Heart right ventricle (tissue), 16 donors: ENCODE measurements at regions of chr18 and their contacts with region 1.

Region 1: DNA sequence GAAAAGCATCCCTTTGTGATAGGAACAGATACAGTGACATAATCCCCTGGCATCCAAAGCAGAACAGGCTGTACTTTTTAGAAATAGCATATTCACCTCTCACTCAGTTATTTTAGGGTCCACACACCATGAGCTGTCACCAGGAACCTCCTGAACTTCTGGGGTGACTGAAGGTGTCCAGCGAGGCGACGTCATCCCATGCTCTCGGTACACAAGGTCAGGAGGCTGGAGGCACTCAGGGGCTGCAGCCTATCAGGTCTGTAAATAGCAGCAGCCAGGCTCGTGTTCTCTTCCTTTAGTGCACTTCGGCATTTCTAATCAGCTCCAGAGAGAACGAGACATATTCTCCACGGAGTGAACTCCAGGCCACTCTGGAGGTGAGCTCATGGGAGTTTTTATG is 98.3 kb downstream of the GATA6 start:
- DNase-seq: peak; percentile 70 to 85
- ATAC-seq: peak; percentile 83 to 97 (median 92)
- H3K4me3 ChIP-seq: peak overlapping the region in 5 of 10 donors; percentile 44 to 52 (median 48)
- H3K27ac ChIP-seq: peak overlapping the region; percentile 78 to 95 (median 91)
- H3K4me1 ChIP-seq: peaks cover 0 to 41% (median 4%) of the 10 kb centered on the region in 9 donors
- H3K27me3 ChIP-seq: no peaks in the 10 kb centered on the region
- CTCF ChIP-seq: no peak

Region 2: GRCh38 chr18:22174341-22175145 is 93.2 kb before region 1 on chr18:
- intact Hi-C with region 1: loop called in 4 of 10 experiments (anchors 2 to 5 kb)
- DNase-seq: no peak
- ATAC-seq: peak in 5 of 8 donors; percentile 16 to 62 (median 44)
- H3K4me3 ChIP-seq: peak overlapping the region; percentile 23 to 97 (median 85)
- H3K27ac ChIP-seq: peak overlapping the region; percentile 80 to 100 (median 97)
- H3K4me1 ChIP-seq: peaks cover 0 to 34% (median 11%) of the 10 kb centered on the region in 9 donors
- H3K27me3 ChIP-seq: peaks cover 0 to 98% (median 0%) of the 10 kb centered on the region in 7 donors
- CTCF ChIP-seq: peak in 5 of 9 donors; percentile 4 to 35 (median 30)

Region 3: DNA sequence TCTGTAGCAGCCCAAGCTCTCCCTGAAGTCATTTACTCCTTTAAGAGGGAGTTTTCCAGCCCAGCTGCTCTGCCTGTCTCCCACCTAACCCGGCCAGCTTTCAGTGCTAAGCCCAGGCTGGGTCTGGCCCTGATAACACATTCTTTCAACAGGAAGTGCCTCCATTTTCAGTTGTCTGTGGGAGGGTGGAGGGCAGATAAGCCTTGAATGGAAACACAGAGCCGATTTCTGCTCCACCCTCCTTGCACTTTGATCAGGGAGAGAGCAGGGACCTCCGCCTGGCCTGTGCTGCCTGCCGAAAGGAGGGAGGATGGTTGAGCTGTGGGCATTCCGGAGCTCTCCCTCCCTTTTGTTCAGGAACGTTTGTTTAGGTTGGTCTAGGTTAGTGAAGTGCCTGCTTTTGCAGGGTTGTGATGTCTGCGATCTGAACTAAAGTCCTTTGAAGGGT is 73.5 kb before region 1 on chr18:
- intact Hi-C with region 1: loop called in 4 of 10 experiments (anchors 5 kb)
- DNase-seq: no peak
- ATAC-seq: peak; percentile 11 to 65 (median 48)
- H3K4me3 ChIP-seq: peak overlapping the region in 5 of 10 donors; percentile 4 to 31 (median 12)
- H3K27ac ChIP-seq: peak overlapping the region; percentile 16 to 99 (median 74)
- H3K4me1 ChIP-seq: peaks cover 6 to 99% (median 88%) of the 10 kb centered on the region in 9 donors
- H3K27me3 ChIP-seq: no peaks in the 10 kb centered on the region
- CTCF ChIP-seq: no peak

Region 4: GRCh38 chr18:22318745-22319407 is 51.2 kb after region 1 on chr18:
- intact Hi-C with region 1: loop called in 1 of 10 experiments (anchors 5 kb)
- DNase-seq: no peak
- ATAC-seq: peak in 4 of 8 donors; percentile 25 to 47 (median 40)
- H3K4me3 ChIP-seq: no peak overlapping the region
- H3K27ac ChIP-seq: no peak overlapping the region
- H3K4me1 ChIP-seq: peaks cover under 1 to 28% (median 4%) of the 10 kb centered on the region in 9 donors
- H3K27me3 ChIP-seq: no peaks in the 10 kb centered on the region
- CTCF ChIP-seq: no peak

Region 5: GRCh38 chr18:22363867-22364463 is 96.3 kb after region 1 on chr18:
- intact Hi-C with region 1: loop called in 1 of 10 experiments (anchors 5 kb)
- DNase-seq: no peak
- ATAC-seq: peak; percentile 47 to 81 (median 72)
- H3K4me3 ChIP-seq: no peak overlapping the region
- H3K27ac ChIP-seq: no peak overlapping the region
- H3K4me1 ChIP-seq: no peaks in the 10 kb centered on the region
- H3K27me3 ChIP-seq: no peaks in the 10 kb centered on the region
- CTCF ChIP-seq: peak in 7 of 9 donors; percentile 32 to 69 (median 48)

Region 6: GRCh38 chr18:22465859-22466457 is 198.3 kb after region 1 on chr18:
- intact Hi-C with region 1: loop called in 4 of 10 experiments (anchors 5 to 10 kb)
- DNase-seq: peak in 1 of 2 donors; percentile 74
- ATAC-seq: peak; percentile 85 to 95 (median 90)
- H3K4me3 ChIP-seq: no peak overlapping the region
- H3K27ac ChIP-seq: peak overlapping the region; percentile 56 to 90 (median 85)
- H3K4me1 ChIP-seq: peaks cover 15 to 48% (median 42%) of the 10 kb centered on the region in 9 donors
- H3K27me3 ChIP-seq: no peaks in the 10 kb centered on the region
- CTCF ChIP-seq: no peak